ENCODE measurements at regions of chrX and their contacts with region 1.

Region 1: GRCh38 chrX:437661-438390 is 51.1 kb upstream of the PPP2R3B start:
- DNase-seq: no peak
- H3K4me3 ChIP-seq: no peak overlapping the region
- CTCF ChIP-seq: no peak

Region 2: GRCh38 chrX:373637-374471 is 64.0 kb before region 1 on chrX:
- in situ Hi-C with region 1: loop called (anchors 10 kb)
- DNase-seq: no peak
- H3K4me3 ChIP-seq: peak overlapping the region; percentile 51
- CTCF ChIP-seq: no peak

Region 3: DNA sequence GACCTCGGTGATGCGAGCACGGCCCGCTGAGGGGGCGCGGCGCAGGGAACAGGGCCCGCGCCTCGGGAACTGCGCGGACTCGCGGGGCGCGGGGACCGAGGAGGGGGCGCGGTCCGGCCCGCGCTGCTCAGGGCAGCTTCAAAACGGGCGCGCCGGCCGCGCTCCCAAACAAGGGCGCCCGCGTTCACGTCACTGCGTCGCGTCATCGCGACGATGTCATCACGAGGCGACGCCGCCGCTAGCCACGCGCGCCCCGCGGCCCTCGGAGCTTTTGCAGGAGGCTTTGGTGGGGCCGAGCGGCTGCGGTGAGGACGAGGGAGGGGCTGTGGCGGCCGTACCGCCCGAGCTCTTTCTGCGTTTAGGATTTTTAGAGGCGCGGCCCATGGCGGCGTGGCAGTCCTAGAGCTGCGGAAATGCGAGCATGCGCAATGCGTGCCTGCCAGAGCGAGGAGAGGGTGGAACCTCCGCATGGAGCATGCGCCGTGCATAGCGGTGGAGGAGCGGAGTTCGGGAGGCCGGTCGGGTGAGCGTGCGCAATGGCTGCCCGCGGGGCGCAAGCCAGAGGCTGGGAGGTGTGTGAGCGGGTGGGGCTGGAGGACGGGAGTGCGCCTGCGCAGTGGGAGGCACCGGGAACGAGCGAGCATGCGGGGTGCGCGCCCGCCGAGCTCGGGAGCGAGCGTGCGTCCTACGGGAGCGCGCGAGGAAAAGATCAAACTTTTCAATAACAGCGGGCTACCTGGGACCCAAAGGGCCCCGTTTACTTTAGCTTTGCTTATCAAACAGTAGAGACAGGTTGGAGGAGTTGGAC is 50.9 kb before region 1 on chrX and contains the start of gene PPP2R3B:
- in situ Hi-C with region 1: no loop called
- DNase-seq: peak; percentile 99
- H3K4me3 ChIP-seq: peak within 1 kb of the TSS; percentile 95
- CTCF ChIP-seq: no peak

Region 4: DNA sequence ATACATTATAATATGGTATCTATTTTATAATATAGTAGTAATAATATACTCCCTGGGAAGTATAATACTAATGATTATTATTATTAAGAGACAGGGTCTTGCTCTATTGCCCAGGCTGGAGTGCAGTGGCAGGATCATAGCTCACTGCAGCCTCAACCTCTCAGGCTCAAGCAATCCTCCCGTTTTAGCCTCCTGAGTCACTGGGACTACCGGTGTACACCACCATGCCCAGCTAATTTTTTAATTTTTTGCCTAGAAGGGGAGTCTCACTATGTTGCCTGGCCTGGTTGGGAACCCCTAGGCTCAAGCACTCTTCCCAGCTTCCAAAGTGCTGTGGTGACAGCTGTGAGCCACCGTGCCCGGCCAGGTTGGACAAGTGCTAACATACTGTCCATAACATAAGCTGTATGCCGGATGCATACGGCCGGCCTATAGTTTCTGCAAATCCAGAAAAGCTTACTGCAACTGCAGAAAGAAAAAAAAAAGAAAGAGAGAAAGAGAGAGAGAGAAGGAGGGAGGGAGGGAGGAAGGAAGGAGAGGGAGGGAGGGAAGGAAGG is 43.1 kb after region 1 on chrX:
- in situ Hi-C with region 1: loop called (anchors 5 kb)
- DNase-seq: no peak
- H3K4me3 ChIP-seq: no peak overlapping the region
- CTCF ChIP-seq: no peak